ENCODE measurements at regions of chr10 and their contacts with region 1.

Region 1: GRCh38 chr10:103888113-103888841 is 29.7 kb downstream of the STN1 start:
- DNase-seq: peak; percentile 75 to 91
- ATAC-seq: peak; percentile 85 to 92 (median 90)
- H3K4me3 ChIP-seq: no peak overlapping the region
- H3K27ac ChIP-seq: peak overlapping the region; percentile 78
- H3K4me1 ChIP-seq: peaks cover 16% of the 10 kb centered on the region
- H3K27me3 ChIP-seq: no peaks in the 10 kb centered on the region
- CTCF ChIP-seq: peak; percentile 88

Region 2: DNA sequence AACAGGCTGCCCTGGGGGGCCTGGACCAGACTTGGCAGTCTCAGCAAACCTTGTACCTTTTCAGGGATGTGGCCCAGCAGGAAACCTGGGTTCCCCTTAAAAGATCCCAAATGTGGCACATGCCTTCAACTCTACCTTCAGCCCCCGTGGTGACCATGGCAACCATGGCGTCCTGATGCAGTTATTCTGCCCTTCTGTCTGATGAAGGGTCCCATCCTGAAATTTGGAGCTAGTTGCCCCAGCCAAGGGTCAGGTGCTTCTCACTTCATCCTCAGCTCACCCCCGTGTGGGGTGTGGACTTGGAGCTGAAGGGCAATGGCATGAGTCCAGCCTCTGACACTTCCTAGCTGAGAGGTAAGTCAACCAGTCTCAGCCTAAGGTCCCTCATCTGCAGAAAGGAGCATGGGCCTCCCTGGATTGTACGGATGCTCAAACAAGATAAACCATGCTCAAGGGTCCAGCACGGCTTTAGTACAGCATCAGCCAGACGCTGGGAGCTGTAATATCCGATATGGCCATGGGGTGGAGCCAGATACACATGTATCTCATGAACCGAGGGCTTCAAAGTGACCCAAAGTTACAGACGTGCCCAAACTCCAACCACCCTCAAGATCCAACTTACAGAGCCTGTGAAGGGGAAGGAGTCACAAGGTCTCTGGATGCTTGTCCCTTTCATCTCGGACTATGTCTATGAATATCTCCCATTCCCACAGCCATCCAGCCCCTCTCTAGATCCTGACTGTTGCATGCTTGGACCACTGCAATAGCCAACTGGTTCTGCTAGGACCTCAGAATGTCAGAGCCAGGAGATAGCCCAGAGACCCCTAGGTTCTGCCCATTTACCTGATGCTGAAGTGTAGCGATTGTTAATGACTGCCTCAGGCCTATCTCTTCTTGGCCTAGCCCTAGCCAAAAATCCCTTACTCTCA is 175.4 kb before region 1 on chr10:
- intact Hi-C with region 1: loop called in 1 of 2 experiments (anchors 1 kb)
- DNase-seq: peak; percentile 75 to 87
- ATAC-seq: peak; percentile 87 to 96 (median 90)
- H3K4me3 ChIP-seq: no peak overlapping the region
- H3K27ac ChIP-seq: no peak overlapping the region
- H3K4me1 ChIP-seq: peaks cover 4% of the 10 kb centered on the region
- H3K27me3 ChIP-seq: no peaks in the 10 kb centered on the region
- CTCF ChIP-seq: peak; percentile 95

Region 3: DNA sequence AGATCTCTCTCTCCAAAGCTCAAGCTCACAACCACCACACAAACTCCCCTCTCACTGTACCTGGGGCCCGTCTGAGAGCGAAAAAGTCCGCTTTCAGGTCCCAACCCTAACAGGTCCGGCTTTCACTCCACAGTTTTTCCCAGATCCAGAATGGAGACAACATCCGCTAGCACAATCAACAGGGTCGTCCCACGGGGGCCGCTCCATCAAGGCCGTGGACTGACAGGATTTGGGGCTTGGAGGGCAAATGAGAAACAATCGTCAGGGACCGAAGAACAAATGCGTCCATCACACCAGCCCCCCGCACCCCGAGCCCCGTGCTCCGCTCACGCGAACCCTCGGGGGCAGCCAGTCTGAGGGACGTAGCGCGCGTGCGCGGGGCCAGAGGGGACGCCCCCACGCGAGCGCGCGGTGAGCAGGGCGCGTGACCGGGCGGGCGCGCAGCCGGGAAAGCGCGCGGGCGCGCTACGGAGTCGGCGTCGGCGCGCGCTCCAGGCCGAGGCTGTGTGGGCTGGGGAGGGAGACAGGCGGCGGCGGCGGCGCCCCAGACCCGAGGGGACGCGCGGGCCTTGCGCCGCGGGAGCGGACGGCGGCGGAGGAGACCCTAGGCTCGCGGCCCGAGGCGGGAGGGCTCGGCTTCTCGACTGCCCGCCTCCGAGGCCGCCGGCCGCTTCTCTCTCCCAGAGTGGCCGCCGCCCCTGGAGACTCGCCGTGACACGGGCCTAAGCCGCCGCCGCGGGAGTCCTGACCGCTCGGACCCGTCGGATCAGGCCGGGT is 78.6 kb after region 1 on chr10 and contains the start of gene SLK:
- intact Hi-C with region 1: loop called (anchors 5 kb)
- DNase-seq: peak; percentile 89 to 93
- ATAC-seq: peak; percentile 96 to 98 (median 98)
- H3K4me3 ChIP-seq: peak within 1 kb of the TSS; percentile 97
- H3K27ac ChIP-seq: peak within 1 kb of the TSS; percentile 95
- H3K4me1 ChIP-seq: peaks cover 25% of the 10 kb centered on the region
- H3K27me3 ChIP-seq: no peaks in the 10 kb centered on the region
- CTCF ChIP-seq: no peak
- total RNA-seq, gene SLK: 36.6 to 48.6 (median 41.0) TPM

Region 4: GRCh38 chr10:104209575-104210198 is 321.4 kb after region 1 on chr10:
- intact Hi-C with region 1: loop called (anchors 2 to 5 kb)
- DNase-seq: no peak
- ATAC-seq: peak in 3 of 4 donors; percentile 51 to 90 (median 76)
- H3K4me3 ChIP-seq: no peak overlapping the region
- H3K27ac ChIP-seq: no peak overlapping the region
- H3K4me1 ChIP-seq: peaks cover 17% of the 10 kb centered on the region
- H3K27me3 ChIP-seq: no peaks in the 10 kb centered on the region
- CTCF ChIP-seq: peak; percentile 58